Adrenal gland (tissue), 19 donors: ENCODE measurements at regions of chr13 and their contacts with region 1.

Region 1: DNA sequence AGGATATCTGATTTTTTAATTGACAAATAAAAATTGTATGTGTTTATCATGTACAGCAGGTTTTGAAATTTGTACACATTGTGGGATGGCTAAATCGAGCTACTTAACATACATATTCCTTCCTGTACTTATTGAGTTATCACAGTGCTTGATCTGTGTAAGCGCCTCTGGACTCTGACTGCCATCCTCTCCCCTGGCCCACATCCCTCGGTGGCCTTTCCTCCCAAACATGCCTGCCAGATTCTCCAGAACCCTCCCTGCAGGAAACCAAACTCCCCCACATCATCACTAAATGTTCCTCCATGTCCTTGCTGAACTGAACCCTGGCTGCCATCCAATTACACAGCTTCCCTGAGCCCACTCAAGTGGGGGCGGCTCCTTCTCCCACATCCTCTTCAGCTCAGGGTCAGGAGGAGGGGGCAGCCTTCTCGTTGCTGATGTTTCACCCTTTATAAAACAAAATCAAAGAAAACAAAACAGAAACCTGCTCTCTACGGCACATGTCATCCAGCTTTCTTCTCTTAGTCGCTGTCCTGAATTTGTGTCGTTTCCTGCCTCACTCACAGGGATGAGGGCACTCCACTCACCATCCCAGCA is 97.1 kb upstream of the SPATA13 start:
- DNase-seq: peak in 4 of 7 donors; percentile 42 to 79 (median 52)
- H3K4me3 ChIP-seq: no peak overlapping the region
- H3K27ac ChIP-seq: peak overlapping the region in 2 of 5 donors; percentile 11 to 48
- H3K4me1 ChIP-seq: peaks cover 0 to 4% of the 10 kb centered on the region in 2 donors
- H3K27me3 ChIP-seq: no peaks in the 10 kb centered on the region
- CTCF ChIP-seq: no peak
- POLR2A ChIP-seq: no peak

Region 2: DNA sequence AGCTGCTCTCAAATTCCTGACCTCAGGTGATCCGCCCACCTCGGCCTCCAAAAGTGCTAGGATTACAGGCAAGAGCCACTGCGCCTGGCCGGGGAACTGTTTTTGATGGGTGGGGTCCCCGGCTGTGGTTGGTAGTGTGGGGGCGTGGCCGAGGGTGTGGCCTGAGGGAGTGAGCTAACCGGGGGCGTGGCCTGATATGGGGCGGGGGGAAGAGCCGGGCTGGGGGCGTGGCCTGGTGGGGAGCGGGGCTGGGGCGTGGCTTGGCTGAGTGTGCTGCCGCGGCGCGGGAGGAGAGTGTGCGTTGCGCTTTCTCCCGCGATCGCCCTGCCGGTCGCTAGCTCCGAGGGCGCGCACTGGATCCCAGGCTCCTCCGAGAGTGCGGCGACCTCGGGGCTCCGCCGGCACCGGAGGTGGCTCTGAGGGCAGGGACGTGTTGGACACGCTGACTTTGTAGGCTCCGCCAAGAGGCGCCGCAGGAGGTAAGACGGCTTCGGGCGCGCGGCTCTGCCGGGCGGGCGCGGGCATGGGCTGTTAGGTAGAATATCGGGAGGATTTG is 97.2 kb after region 1 on chr13 and contains the start of gene SPATA13:
- intact Hi-C with region 1: loop called in 1 of 2 experiments (anchors 10 kb)
- DNase-seq: peak; percentile 93 to 97 (median 96)
- H3K4me3 ChIP-seq: peak within 1 kb of the TSS; percentile 49 to 91 (median 72)
- H3K27ac ChIP-seq: peak within 1 kb of the TSS in 4 of 5 donors; percentile 13 to 86 (median 56)
- H3K4me1 ChIP-seq: peaks cover 12 to 28% of the 10 kb centered on the region in 2 donors
- H3K27me3 ChIP-seq: no peaks in the 10 kb centered on the region
- CTCF ChIP-seq: no peak
- POLR2A ChIP-seq: peak in 1 of 2 donors; percentile 87
- total RNA-seq, gene SPATA13: 20.0 to 85.5 (median 39.5) TPM